ENCODE measurements at regions of chr3 and their contacts with region 1.

Region 1: DNA sequence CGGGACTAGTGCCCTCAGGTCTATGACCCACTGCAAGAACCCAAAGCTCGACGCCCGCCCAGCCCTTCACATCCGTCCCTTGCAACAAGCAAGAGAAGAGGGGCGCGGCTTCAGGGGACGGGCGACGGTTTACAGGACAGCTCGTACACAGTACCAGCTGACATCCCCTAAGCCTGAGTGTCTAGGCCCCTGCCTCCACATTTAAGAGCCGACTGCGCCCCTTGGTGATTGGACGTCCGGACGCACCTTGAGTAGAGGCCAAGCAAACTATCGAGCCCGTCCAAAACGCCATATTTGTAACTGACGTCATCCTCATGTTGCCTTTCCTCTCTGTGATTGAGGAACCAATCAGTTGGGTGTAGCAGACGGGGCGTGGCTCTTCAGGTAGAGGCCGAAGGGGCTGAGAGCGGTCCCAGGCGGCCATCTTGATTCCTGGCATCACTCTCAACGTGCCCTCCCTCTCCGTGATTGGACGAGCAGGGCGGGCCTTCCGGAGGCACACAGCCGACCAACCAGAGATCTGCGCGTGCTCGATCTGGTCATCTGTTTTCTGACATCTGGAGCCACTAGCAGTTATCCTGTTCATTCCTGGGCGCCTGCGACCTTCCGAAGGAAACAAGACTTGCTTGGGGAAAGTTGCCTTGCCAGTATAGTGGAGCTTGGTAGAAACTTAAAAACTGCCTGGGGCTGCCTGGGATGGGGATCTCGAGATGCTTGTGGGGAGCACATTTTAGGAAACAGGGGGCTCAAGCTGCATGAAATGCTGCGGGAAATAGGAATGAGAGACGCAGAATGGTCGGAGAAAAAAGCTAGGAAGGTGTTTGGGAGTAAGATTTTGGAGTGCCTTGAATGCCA is 4.0 kb upstream of the RPL14 start:
- DNase-seq: peak; percentile 81 to 97 (median 93)
- ATAC-seq: peak; percentile 95
- H3K4me3 ChIP-seq: peak overlapping the region; percentile 79
- H3K4me3 Mint-ChIP-seq: peak overlapping the region; percentile 88 to 99 (median 94)
- H3K27ac ChIP-seq: peak overlapping the region; percentile 94
- H3K27ac Mint-ChIP-seq: peak overlapping the region; percentile 96 to 100 (median 98)
- H3K4me1 ChIP-seq: peaks cover 13 to 18% of the 10 kb centered on the region in 2 donors
- H3K4me1 Mint-ChIP-seq: peaks cover 13 to 53% (median 39%) of the 10 kb centered on the region in 7 donors
- H3K27me3 ChIP-seq: no peaks in the 10 kb centered on the region
- H3K27me3 Mint-ChIP-seq: no peaks in the 10 kb centered on the region

Region 2: GRCh38 chr3:39051647-39052561 is 1401.2 kb before region 1 on chr3 and contains the starts of genes SCN11A and WDR48:
- CTCF ChIA-PET with region 1: no interaction called
- POLR2A ChIA-PET with region 1: no interaction called
- intact Hi-C with region 1: loop called (anchors 5 kb)
- DNase-seq: peak; percentile 78 to 95 (median 90)
- ATAC-seq: peak; percentile 93
- H3K4me3 ChIP-seq: peak within 1 kb of the TSS; percentile 80
- H3K4me3 Mint-ChIP-seq: peak within 1 kb of the TSS; percentile 91 to 99 (median 99)
- H3K27ac ChIP-seq: peak within 1 kb of the TSS; percentile 98
- H3K27ac Mint-ChIP-seq: peak within 1 kb of the TSS; percentile 95 to 100 (median 99)
- H3K4me1 ChIP-seq: peaks cover 7 to 16% of the 10 kb centered on the region in 2 donors
- H3K4me1 Mint-ChIP-seq: peaks cover 32 to 81% (median 77%) of the 10 kb centered on the region in 7 donors
- H3K27me3 ChIP-seq: no peaks in the 10 kb centered on the region
- H3K27me3 Mint-ChIP-seq: no peaks in the 10 kb centered on the region
- total RNA-seq, gene SCN11A: 0.07 to 0.32 (median 0.19) TPM
- total RNA-seq, gene WDR48: 46.7 to 97.7 (median 68.0) TPM

Region 3: DNA sequence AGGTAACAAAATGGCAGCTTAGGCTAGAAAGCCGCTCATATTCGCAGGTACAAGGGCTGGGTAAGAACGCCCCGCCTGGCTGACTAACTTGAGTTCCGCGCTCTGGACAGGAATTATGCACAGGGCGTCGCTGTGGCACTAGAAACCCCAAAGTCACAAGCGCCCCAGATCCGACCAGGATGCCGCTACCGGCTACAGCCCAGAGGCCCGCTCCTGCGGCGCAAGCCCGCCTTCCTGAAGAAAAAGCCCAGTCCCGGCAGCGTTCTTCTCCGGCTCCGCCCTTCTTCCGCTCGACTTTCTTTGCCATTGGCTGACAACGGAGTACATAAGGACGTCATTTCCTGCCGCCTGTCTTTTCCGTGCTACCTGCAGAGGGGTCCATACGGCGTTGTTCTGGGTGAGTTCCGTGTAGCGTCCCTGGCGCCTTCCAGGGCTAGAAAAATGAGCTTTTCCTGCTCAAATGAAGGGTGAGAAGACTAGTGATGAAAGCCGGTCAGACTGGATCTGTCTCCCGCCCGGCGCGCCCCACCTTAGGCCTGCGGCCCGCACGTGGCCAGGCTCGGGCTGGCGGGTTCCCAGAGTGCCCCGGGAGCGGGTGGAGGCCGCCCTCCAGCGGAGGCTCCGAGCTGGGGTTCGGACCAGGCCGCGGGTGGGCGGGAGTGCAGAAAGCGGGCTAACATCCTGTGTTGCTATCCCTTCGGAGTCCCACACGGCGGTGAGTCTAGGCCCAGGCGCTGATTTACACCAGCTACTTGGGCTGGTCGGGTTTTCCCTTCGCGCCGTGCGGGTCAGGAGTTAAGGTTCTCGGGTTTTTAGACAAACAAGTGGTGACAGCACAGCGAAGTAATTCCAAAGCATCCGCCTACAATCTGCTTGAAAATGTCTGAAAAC is 1046.5 kb before region 1 on chr3 and contains the start of gene RPSA:
- CTCF ChIA-PET with region 1: no interaction called
- POLR2A ChIA-PET with region 1: interaction called, 3 read pairs
- intact Hi-C with region 1: loop called (anchors 1 to 10 kb)
- DNase-seq: peak; percentile 80 to 99 (median 98)
- ATAC-seq: peak; percentile 96
- H3K4me3 ChIP-seq: peak within 1 kb of the TSS; percentile 62
- H3K4me3 Mint-ChIP-seq: peak within 1 kb of the TSS; percentile 88 to 97 (median 94)
- H3K27ac ChIP-seq: peak within 1 kb of the TSS; percentile 86
- H3K27ac Mint-ChIP-seq: peak within 1 kb of the TSS; percentile 88 to 98 (median 96)
- H3K4me1 ChIP-seq: peaks cover 30 to 37% of the 10 kb centered on the region in 2 donors
- H3K4me1 Mint-ChIP-seq: peaks cover 28 to 55% (median 51%) of the 10 kb centered on the region in 7 donors
- H3K27me3 ChIP-seq: no peaks in the 10 kb centered on the region
- H3K27me3 Mint-ChIP-seq: peaks cover 0 to 2% (median 0%) of the 10 kb centered on the region in 5 donors
- total RNA-seq, gene RPSA: 1,411 to 1,898 (median 1,693) TPM

Region 4: DNA sequence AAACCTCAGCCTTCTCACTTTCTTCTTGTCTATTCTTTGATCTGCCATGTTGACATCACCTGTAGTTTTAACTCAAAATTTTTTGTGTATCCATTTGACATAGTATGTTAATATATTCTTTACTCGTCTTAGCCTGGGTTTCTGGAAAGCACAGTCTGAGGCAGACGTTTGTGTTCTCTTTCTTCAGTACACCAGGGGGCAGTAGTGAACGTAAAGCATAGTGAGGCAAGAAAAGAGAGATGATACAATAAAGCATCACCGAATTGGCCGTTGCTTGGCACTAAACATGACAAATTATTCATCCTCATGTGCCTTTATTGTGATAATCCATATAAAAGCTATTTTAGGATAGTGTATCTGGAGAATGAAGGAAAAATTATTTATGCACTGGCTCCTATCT is 784.7 kb before region 1 on chr3:
- CTCF ChIA-PET with region 1: no interaction called
- POLR2A ChIA-PET with region 1: no interaction called
- intact Hi-C with region 1: no loop called
- DNase-seq: peak in 1 of 9 donors; percentile 2
- ATAC-seq: peak; percentile 36
- H3K4me3 ChIP-seq: no peak overlapping the region
- H3K4me3 Mint-ChIP-seq: no peak overlapping the region
- H3K27ac ChIP-seq: no peak overlapping the region
- H3K27ac Mint-ChIP-seq: no peak overlapping the region
- H3K4me1 ChIP-seq: no peaks in the 10 kb centered on the region
- H3K4me1 Mint-ChIP-seq: no peaks in the 10 kb centered on the region
- H3K27me3 ChIP-seq: no peaks in the 10 kb centered on the region
- H3K27me3 Mint-ChIP-seq: peaks cover 4 to 24% (median 11%) of the 10 kb centered on the region in 5 donors

Region 5: DNA sequence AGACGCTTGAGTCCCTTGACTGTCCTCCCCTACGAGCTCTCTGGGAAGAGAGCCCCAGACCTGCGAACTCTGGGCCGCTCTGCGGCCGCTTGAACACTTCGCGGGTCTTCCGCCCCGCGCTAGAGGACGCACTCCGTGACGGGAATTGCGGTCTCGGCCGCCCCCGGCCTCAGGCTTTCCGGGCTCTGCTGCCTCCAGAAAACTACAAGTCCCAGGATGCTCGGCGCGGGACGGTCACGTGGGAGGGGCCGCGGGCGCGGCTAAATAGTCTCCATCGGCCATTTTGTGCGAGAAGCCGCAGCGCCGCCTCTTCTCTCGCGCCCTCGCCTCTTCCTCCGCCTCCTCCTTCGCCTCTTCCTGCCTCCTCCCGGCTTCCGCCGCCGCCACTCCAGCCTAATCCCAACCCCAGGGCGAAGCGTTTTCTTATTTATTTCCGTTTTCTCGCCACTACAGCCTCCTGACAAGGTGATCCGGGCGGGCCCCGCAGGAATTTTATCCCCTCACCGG is 143.6 kb before region 1 on chr3 and contains the start of gene EIF1B:
- CTCF ChIA-PET with region 1: no interaction called
- POLR2A ChIA-PET with region 1: interaction called, 26 read pairs
- intact Hi-C with region 1: loop called (anchors 1 kb)
- DNase-seq: peak; percentile 95 to 99 (median 98)
- ATAC-seq: peak; percentile 97
- H3K4me3 ChIP-seq: peak within 1 kb of the TSS; percentile 80
- H3K4me3 Mint-ChIP-seq: peak within 1 kb of the TSS; percentile 92 to 100 (median 99)
- H3K27ac ChIP-seq: peak within 1 kb of the TSS; percentile 99
- H3K27ac Mint-ChIP-seq: peak within 1 kb of the TSS; percentile 97 to 100 (median 99)
- H3K4me1 ChIP-seq: peaks cover 5 to 16% of the 10 kb centered on the region in 2 donors
- H3K4me1 Mint-ChIP-seq: peaks cover 5 to 44% (median 30%) of the 10 kb centered on the region in 7 donors
- H3K27me3 ChIP-seq: no peaks in the 10 kb centered on the region
- H3K27me3 Mint-ChIP-seq: no peaks in the 10 kb centered on the region
- total RNA-seq, gene EIF1B: 34.5 to 82.0 (median 53.3) TPM

Region 6: DNA sequence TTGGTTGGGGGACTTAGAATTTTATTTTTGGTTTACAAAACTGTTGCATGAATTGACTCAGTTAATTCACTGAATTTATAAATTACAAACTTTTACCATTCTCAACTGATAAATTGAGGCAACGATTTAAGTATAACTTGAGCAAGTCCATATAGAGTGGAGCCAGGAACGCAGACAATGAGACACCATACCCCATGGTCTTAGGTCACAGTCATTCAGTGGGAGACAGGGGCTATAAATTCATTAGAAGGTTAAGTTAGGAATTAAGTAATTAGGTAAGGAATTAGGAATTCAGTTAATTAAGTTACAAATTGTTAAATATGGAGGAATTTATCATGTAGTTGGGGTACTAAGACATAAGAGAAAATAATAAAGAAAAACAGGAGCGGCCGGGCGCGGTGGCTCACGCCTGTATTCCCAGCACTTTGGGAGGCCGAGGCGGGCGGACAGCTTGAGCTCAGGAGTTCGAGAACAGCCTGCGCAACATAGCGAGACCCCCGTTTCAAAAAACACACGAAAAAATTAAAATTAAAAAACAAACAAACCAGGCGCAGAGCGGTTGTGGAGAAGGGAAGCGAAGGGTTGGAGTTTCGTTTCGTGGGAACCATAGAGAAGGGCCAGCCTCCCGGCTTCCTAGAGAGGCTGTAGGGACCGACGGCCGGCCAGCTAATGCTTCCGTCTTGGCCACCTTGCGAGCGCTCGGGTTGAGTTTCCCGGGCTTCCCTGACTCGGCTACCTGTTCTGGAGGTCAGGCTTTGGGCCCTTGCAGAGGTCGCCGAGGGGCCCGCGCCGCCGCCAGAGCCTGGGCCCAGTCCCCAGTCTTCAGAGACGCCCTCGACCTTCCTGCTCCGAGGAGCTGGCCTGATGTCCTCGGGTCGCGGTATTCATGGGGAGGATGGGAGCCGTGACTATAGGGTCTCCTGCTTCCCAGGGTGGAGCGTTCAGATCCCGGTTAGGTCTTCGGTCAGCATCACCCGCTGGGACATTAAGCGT is 23.7 kb after region 1 on chr3 and contains the start of gene ZNF619:
- CTCF ChIA-PET with region 1: no interaction called
- POLR2A ChIA-PET with region 1: interaction called, 23 read pairs
- intact Hi-C with region 1: loop called (anchors 1 kb)
- DNase-seq: peak; percentile 11 to 60 (median 47)
- ATAC-seq: peak; percentile 93
- H3K4me3 ChIP-seq: peak within 1 kb of the TSS; percentile 82
- H3K4me3 Mint-ChIP-seq: peak within 1 kb of the TSS; percentile 84 to 97 (median 89)
- H3K27ac ChIP-seq: peak within 1 kb of the TSS; percentile 80
- H3K27ac Mint-ChIP-seq: peak within 1 kb of the TSS; percentile 61 to 97 (median 90)
- H3K4me1 ChIP-seq: peaks cover 7 to 8% of the 10 kb centered on the region in 2 donors
- H3K4me1 Mint-ChIP-seq: peaks cover 13 to 38% (median 31%) of the 10 kb centered on the region in 7 donors
- H3K27me3 ChIP-seq: no peaks in the 10 kb centered on the region
- H3K27me3 Mint-ChIP-seq: no peaks in the 10 kb centered on the region
- total RNA-seq, gene ZNF619: 5.0 to 13.9 (median 12.3) TPM

Region 7: DNA sequence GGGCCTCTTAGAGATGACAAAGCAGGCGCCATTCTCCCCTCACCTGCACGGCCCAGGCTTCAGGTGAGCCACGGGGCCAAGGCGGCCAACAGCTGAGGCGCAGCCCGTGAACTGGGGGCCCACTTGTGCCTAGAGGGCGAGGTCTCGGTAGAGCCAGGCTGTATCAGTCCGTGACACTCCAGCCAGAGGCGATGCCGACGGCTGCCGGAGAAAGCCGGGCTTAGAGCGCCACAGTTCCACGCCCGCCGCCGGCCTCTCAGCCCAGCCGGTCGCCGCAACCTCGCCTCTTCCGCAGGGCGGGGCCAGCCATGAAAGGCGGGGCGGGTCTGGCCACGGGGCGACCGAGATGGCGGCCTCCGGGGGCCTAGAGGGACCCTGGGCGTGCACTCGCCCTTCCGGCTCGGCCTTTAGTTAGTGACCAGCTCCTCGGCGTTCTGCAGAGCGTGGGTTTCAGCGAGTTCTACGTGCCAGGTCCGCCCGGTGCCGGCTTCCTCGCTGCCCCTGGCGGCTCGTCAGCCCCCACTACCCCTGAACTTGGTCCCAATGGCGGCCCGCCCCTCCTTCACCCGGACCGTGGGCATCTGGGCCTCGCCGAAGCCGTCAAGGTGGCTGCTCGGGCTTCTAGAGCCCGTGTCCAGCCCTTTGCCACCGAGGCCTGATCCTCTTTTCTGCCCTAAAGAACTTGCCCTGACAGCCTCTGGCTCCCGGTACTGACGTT is 71.6 kb after region 1 on chr3 and contains the start of gene ZNF621:
- CTCF ChIA-PET with region 1: interaction called, 3 read pairs
- POLR2A ChIA-PET with region 1: interaction called, 37 read pairs
- intact Hi-C with region 1: loop called (anchors 1 kb)
- DNase-seq: peak; percentile 43 to 90 (median 73)
- ATAC-seq: peak; percentile 99
- H3K4me3 ChIP-seq: peak within 1 kb of the TSS; percentile 69
- H3K4me3 Mint-ChIP-seq: peak within 1 kb of the TSS; percentile 85 to 97 (median 96)
- H3K27ac ChIP-seq: peak within 1 kb of the TSS; percentile 81
- H3K27ac Mint-ChIP-seq: peak within 1 kb of the TSS; percentile 91 to 98 (median 97)
- H3K4me1 ChIP-seq: peaks cover 0 to 15% of the 10 kb centered on the region in 2 donors
- H3K4me1 Mint-ChIP-seq: peaks cover 17 to 39% (median 27%) of the 10 kb centered on the region in 7 donors
- H3K27me3 ChIP-seq: no peaks in the 10 kb centered on the region
- H3K27me3 Mint-ChIP-seq: no peaks in the 10 kb centered on the region
- total RNA-seq, gene ZNF621: 14.6 to 26.9 (median 21.9) TPM

Region 8: GRCh38 chr3:40597441-40597840 is 144.3 kb after region 1 on chr3:
- CTCF ChIA-PET with region 1: no interaction called
- POLR2A ChIA-PET with region 1: no interaction called
- intact Hi-C with region 1: no loop called
- DNase-seq: no peak
- ATAC-seq: no peak
- H3K4me3 ChIP-seq: no peak overlapping the region
- H3K4me3 Mint-ChIP-seq: no peak overlapping the region
- H3K27ac ChIP-seq: no peak overlapping the region
- H3K27ac Mint-ChIP-seq: no peak overlapping the region
- H3K4me1 ChIP-seq: no peaks in the 10 kb centered on the region
- H3K4me1 Mint-ChIP-seq: peaks cover 0 to 6% (median 0%) of the 10 kb centered on the region in 7 donors
- H3K27me3 ChIP-seq: no peaks in the 10 kb centered on the region
- H3K27me3 Mint-ChIP-seq: peaks cover 19 to 44% (median 34%) of the 10 kb centered on the region in 5 donors

Region 9: GRCh38 chr3:41198950-41199865 is 746.1 kb after region 1 on chr3 and contains the start of gene CTNNB1:
- CTCF ChIA-PET with region 1: no interaction called
- POLR2A ChIA-PET with region 1: interaction called, 6 read pairs
- intact Hi-C with region 1: loop called (anchors 1 kb)
- DNase-seq: peak; percentile 88 to 94 (median 92)
- ATAC-seq: peak; percentile 93
- H3K4me3 ChIP-seq: peak within 1 kb of the TSS; percentile 79
- H3K4me3 Mint-ChIP-seq: peak within 1 kb of the TSS; percentile 90 to 100 (median 95)
- H3K27ac ChIP-seq: peak within 1 kb of the TSS; percentile 97
- H3K27ac Mint-ChIP-seq: peak within 1 kb of the TSS; percentile 92 to 98 (median 96)
- H3K4me1 ChIP-seq: peaks cover 26 to 39% of the 10 kb centered on the region in 2 donors
- H3K4me1 Mint-ChIP-seq: peaks cover 31 to 43% (median 38%) of the 10 kb centered on the region in 7 donors
- H3K27me3 ChIP-seq: peaks cover 0 to 3% of the 10 kb centered on the region in 2 donors
- H3K27me3 Mint-ChIP-seq: peaks cover 0 to 29% (median 0%) of the 10 kb centered on the region in 5 donors
- total RNA-seq, gene CTNNB1: 118 to 227 (median 177) TPM

Measured in naive thymus-derived CD4-positive, alpha-beta T cell (primary cell).